PC-9 (cell line): ENCODE measurements at regions of chr10 and their contacts with region 1.

Region 1: DNA sequence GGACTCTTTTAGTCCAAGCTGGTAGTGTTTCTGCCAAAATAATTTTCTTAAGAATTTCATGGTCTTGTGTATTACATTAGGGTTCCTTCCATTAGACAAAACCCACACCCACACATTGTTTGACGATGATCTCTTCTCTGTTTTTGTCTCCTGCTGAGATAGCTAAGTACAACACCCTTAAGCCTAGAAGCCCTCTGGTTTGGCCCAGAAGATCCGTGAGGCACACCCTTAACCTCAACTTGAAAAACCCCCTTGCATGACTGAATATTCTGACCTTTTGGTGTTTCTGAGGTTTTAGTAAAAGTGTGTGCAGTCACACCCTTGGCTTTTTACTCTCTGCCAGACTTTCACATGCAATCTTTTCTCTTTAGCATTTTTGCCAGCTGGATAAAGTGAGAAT is 29.3 kb upstream of the ERCC6 start:
- DNase-seq: peak in 1 of 2 experiments; percentile 80
- H3K4me3 ChIP-seq: peak overlapping the region; percentile 38; the same call in 1 of the 2 replicates
- H3K27ac ChIP-seq: peak overlapping the region; percentile 95
- H3K4me1 ChIP-seq: peaks cover 49% of the 10 kb centered on the region
- H3K27me3 ChIP-seq: no peaks in the 10 kb centered on the region
- CTCF ChIP-seq: no peak

Region 2: GRCh38 chr10:49552249-49552672 is 16.0 kb before region 1 on chr10:
- CTCF ChIA-PET with region 1: interaction called, 19 read pairs
- POLR2A ChIA-PET with region 1: interaction called, 11 read pairs
- intact Hi-C with region 1: loop called (anchors 1 kb)
- DNase-seq: peak; percentile 67 to 97
- H3K4me3 ChIP-seq: no peak overlapping the region; the same call in 1 of the 2 replicates
- H3K27ac ChIP-seq: peak overlapping the region; percentile 89
- H3K4me1 ChIP-seq: peaks cover 52% of the 10 kb centered on the region
- H3K27me3 ChIP-seq: no peaks in the 10 kb centered on the region
- CTCF ChIP-seq: no peak

Region 3: GRCh38 chr10:49612513-49613164 is 44.4 kb after region 1 on chr10:
- CTCF ChIA-PET with region 1: interaction called, 12 read pairs
- POLR2A ChIA-PET with region 1: no interaction called
- intact Hi-C with region 1: no loop called
- DNase-seq: no peak
- H3K4me3 ChIP-seq: no peak overlapping the region
- H3K27ac ChIP-seq: no peak overlapping the region
- H3K4me1 ChIP-seq: no peaks in the 10 kb centered on the region
- H3K27me3 ChIP-seq: peaks cover 33% of the 10 kb centered on the region
- CTCF ChIP-seq: no peak

Region 4: DNA sequence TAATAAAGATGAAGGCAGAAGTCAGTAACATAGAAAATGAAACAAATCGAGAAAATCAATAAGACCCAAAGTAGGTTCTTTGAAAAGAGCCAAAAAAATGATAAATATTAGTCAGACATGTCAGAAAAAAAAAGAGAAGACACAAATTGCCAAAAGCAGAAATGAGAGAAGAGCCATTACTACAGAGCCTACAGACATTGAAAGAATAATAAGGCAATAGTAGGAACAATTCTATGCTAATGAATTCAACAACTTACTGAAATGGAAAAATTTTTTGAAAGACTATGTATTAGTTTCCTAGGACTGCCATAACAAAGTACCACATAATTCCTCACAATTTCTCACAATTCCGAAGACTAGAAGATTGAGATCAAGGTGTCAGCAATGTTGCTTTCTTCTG is 158.4 kb after region 1 on chr10:
- CTCF ChIA-PET with region 1: no interaction called
- POLR2A ChIA-PET with region 1: interaction called, 13 read pairs
- intact Hi-C with region 1: no loop called
- DNase-seq: no peak
- H3K4me3 ChIP-seq: no peak overlapping the region
- H3K27ac ChIP-seq: no peak overlapping the region
- H3K4me1 ChIP-seq: no peaks in the 10 kb centered on the region
- H3K27me3 ChIP-seq: peaks cover 14% of the 10 kb centered on the region
- CTCF ChIP-seq: no peak